ENCODE measurements at regions of chr1 and their contacts with region 1.

Region 1: DNA sequence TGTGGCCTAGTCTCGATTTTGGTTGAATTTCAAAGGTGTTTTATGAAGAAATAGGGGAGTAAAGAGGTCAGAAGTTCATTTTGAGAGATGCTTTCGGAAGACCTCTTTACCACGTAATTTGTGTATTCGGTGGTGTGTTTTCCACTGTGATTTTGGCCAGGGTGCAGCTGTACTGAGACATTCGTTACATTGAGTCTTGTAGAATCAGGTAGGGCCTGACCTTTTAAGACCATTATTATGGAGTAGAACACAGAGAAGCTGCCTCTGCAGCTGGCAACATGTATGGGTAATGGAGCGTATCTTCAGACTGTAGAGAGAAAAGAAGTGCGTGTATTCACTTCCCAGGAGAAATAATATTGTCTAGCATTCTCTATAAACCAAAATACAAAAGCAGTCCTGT is 326.5 kb downstream of the PDE4B start:
- DNase-seq: no peak
- ATAC-seq: no peak
- H3K4me3 ChIP-seq: no peak overlapping the region
- H3K4me3 Mint-ChIP-seq: no peak overlapping the region
- H3K27ac ChIP-seq: no peak overlapping the region
- H3K27ac Mint-ChIP-seq: no peak overlapping the region
- H3K4me1 ChIP-seq: no peaks in the 10 kb centered on the region
- H3K4me1 Mint-ChIP-seq: no peaks in the 10 kb centered on the region
- H3K27me3 ChIP-seq: peaks cover 0 to 8% of the 10 kb centered on the region in 2 experiments
- H3K27me3 Mint-ChIP-seq: peaks cover 5 to 8% of the 10 kb centered on the region in 2 donors

Region 2: DNA sequence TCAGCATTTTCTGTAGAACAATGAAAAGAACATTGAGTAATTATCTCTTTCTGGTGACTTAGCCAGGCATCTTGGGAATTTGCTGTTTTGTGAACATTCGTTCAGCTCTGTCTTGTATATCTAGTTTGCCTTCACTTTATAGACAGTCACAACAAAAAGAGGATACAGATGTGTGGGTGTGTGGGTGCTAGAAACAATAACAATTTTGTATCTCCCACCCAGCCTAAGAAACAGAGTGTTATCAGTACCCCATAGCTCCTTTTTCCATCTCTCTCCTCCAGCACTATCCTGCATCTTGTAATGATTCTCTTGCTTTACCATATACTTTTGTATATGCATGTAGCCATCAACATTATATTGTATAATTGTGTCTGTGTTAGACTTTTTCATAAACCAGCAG is 938.2 kb before region 1 on chr1:
- CTCF ChIA-PET with region 1: no interaction called
- POLR2A ChIA-PET with region 1: interaction called in 1 of 2 experiments, 12 read pairs
- DNase-seq: no peak
- ATAC-seq: no peak
- H3K4me3 ChIP-seq: no peak overlapping the region
- H3K4me3 Mint-ChIP-seq: no peak overlapping the region
- H3K27ac ChIP-seq: no peak overlapping the region
- H3K27ac Mint-ChIP-seq: no peak overlapping the region
- H3K4me1 ChIP-seq: no peaks in the 10 kb centered on the region
- H3K4me1 Mint-ChIP-seq: no peaks in the 10 kb centered on the region
- H3K27me3 ChIP-seq: no peaks in the 10 kb centered on the region
- H3K27me3 Mint-ChIP-seq: peaks cover 2 to 8% of the 10 kb centered on the region in 2 donors

Region 3: GRCh38 chr1:65963156-65963888 is 155.8 kb before region 1 on chr1:
- CTCF ChIA-PET with region 1: no interaction called
- POLR2A ChIA-PET with region 1: no interaction called
- DNase-seq: no peak
- ATAC-seq: no peak
- H3K4me3 ChIP-seq: no peak overlapping the region
- H3K4me3 Mint-ChIP-seq: no peak overlapping the region
- H3K27ac ChIP-seq: no peak overlapping the region
- H3K27ac Mint-ChIP-seq: no peak overlapping the region
- H3K4me1 ChIP-seq: no peaks in the 10 kb centered on the region
- H3K4me1 Mint-ChIP-seq: no peaks in the 10 kb centered on the region
- H3K27me3 ChIP-seq: peaks cover 0 to 2% of the 10 kb centered on the region in 2 experiments
- H3K27me3 Mint-ChIP-seq: peaks cover 6 to 9% of the 10 kb centered on the region in 2 donors

Region 4: DNA sequence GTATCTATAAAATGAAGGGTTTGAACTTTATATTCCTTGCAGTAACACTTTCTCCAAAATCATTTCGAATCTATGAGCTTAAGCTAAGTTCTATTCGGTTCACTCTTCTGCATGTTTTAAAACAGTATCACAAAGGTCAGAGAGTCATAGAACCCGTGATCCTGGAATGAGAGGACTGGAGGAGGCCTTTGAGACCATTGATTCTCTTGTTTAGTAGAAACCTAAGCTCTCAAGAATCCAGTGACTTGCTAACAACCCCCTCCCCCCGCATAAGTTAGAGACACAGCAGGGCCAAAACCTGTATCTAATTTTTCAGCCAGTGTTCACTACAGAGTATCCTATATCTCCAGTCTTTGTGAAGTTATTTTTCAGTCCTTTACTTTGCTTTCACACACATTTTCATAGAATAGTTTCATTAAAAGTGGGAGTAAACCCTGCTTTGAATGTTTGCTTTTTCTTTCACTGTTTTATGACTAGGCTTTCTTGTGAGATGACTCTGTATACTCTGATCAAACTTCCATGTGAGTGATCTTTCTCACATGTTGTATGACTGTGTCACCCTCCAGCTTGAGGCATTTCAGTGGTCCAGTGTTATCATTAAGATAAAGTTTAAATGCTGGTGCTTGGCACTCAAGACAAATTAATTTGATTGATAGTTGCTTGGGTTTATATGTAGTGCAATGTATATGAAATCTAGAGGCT is 139.4 kb after region 1 on chr1:
- CTCF ChIA-PET with region 1: no interaction called
- POLR2A ChIA-PET with region 1: interaction called in 1 of 2 experiments, 10 read pairs
- DNase-seq: no peak
- ATAC-seq: no peak
- H3K4me3 ChIP-seq: no peak overlapping the region
- H3K4me3 Mint-ChIP-seq: no peak overlapping the region
- H3K27ac ChIP-seq: no peak overlapping the region
- H3K27ac Mint-ChIP-seq: no peak overlapping the region
- H3K4me1 ChIP-seq: peaks cover 6 to 23% of the 10 kb centered on the region in 2 experiments
- H3K4me1 Mint-ChIP-seq: peaks cover 35 to 48% (median 45%) of the 10 kb centered on the region in 3 donors
- H3K27me3 ChIP-seq: no peaks in the 10 kb centered on the region
- H3K27me3 Mint-ChIP-seq: no peaks in the 10 kb centered on the region